ENCODE measurements at regions of chr14 and their contacts with region 1.

Region 1: GRCh38 chr14:77053046-77053841 is 24.7 kb upstream of the IRF2BPL start:
- DNase-seq: peak; percentile 88 to 93 (median 91)
- H3K4me3 ChIP-seq: no peak overlapping the region
- H3K27ac ChIP-seq: no peak overlapping the region
- H3K4me1 ChIP-seq: peaks cover 0 to 3% (median 0%) of the 10 kb centered on the region in 3 donors
- H3K27me3 ChIP-seq: no peaks in the 10 kb centered on the region
- CTCF ChIP-seq: peak; percentile 86

Region 2: GRCh38 chr14:76673261-76673660 is 380.0 kb before region 1 on chr14:
- intact Hi-C with region 1: no loop called
- DNase-seq: no peak
- H3K4me3 ChIP-seq: no peak overlapping the region
- H3K27ac ChIP-seq: no peak overlapping the region
- H3K4me1 ChIP-seq: no peaks in the 10 kb centered on the region
- H3K27me3 ChIP-seq: no peaks in the 10 kb centered on the region
- CTCF ChIP-seq: no peak

Region 3: DNA sequence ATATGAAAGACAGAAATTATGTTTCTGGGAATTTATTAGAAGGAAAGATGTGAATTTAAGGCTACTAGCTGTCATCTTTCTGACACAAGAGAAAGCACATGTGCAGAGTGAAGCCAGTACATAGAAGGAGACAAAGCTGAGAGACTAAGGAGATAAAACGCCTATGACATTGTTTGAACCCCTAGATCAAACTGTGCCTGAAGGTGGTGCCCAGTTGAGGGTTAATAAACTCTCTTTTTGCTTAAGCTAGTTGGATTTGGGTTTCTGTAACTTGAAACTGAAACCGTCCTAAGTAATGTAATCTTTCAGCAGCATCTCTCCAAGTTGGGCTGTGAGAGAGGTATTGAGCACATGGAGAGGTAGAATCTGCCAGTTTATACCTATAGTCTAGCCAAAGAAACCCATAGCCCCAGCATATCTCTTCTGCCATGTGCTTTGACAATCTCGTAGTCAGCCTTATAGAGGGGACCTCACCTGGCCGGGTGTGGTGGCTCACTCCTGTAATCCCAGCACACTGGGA is 142.8 kb before region 1 on chr14:
- intact Hi-C with region 1: loop called (anchors 5 kb)
- DNase-seq: no peak
- H3K4me3 ChIP-seq: no peak overlapping the region
- H3K27ac ChIP-seq: no peak overlapping the region
- H3K4me1 ChIP-seq: peaks cover 0 to 14% (median 8%) of the 10 kb centered on the region in 3 donors
- H3K27me3 ChIP-seq: no peaks in the 10 kb centered on the region
- CTCF ChIP-seq: no peak

Measured in kidney (tissue), 22 donors.